Activated naive CD8-positive, alpha-beta T cell treated with anti-CD3 and anti-CD28 coated beads, Interleukin-2, amount 10 ng/mL, durations not matched to agents 7 days and 5 days (primary cell): ENCODE measurements at regions of chr4 and their contacts with region 1.

Region 1: GRCh38 chr4:17810260-17811077 is at the starts of genes DCAF16 and NCAPG:
- DNase-seq: peak; percentile 97
- ATAC-seq: peak; percentile 92
- H3K4me3 Mint-ChIP-seq: peak within 1 kb of the TSS; percentile 92
- H3K27ac Mint-ChIP-seq: peak within 1 kb of the TSS; percentile 99
- H3K4me1 Mint-ChIP-seq: peaks cover 36% of the 10 kb centered on the region
- H3K27me3 Mint-ChIP-seq: no peaks in the 10 kb centered on the region
- total RNA-seq, gene DCAF16: 54.5 to 60.6 TPM
- total RNA-seq, gene NCAPG: 59.1 to 66.6 TPM

Region 2: GRCh38 chr4:17576932-17577665 is 233.4 kb before region 1 on chr4 and contains the start of gene LAP3:
- POLR2A ChIA-PET with region 1: interaction called, 64 read pairs
- DNase-seq: peak; percentile 100
- ATAC-seq: peak; percentile 82
- H3K4me3 Mint-ChIP-seq: peak within 1 kb of the TSS; percentile 94
- H3K27ac Mint-ChIP-seq: peak within 1 kb of the TSS; percentile 99
- H3K4me1 Mint-ChIP-seq: peaks cover 34% of the 10 kb centered on the region
- H3K27me3 Mint-ChIP-seq: no peaks in the 10 kb centered on the region
- total RNA-seq, gene LAP3: 132 to 136 TPM

Region 3: DNA sequence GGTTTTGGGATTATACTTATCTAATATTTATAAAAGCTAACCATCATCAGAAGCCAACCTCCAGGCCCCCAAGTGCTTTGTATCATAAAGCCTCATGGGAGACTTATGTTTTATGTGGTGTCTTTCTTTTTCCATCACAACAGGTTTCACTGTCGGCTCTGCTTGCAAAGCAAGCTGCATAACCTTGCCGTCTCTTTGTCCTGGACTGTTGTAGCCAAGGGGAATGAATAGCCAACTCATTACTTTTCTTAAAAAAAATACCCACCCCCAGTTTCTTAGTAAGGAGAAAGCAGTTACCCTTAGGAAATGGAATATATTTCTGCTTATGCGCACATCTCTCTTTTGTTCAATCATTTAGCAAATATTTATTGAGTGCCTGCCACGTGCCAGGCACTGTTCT is 69.8 kb before region 1 on chr4:
- POLR2A ChIA-PET with region 1: no interaction called
- DNase-seq: no peak
- ATAC-seq: no peak
- H3K4me3 Mint-ChIP-seq: no peak overlapping the region
- H3K27ac Mint-ChIP-seq: no peak overlapping the region
- H3K4me1 Mint-ChIP-seq: no peaks in the 10 kb centered on the region
- H3K27me3 Mint-ChIP-seq: peaks cover 2% of the 10 kb centered on the region

Region 4: DNA sequence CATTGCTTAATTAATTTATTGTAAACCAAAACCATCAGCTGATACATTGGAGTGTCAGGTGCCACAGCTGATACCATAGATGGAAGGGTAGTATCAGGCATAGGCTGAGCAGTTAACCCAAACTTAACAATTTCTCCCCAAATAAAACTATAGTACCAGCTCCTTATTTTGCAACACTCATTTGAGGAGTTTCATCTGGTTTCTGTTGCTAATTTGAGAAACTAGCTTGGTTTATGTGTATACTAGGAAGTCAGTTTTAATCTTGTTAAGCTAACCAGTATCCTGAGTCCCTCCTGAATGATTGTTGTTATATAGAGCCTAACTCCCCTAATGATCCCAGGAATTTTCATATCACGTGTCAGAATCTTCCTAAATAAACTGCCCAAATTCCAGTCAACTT is 12.7 kb before region 1 on chr4:
- POLR2A ChIA-PET with region 1: interaction called, 22 read pairs
- DNase-seq: no peak
- ATAC-seq: no peak
- H3K4me3 Mint-ChIP-seq: no peak overlapping the region
- H3K27ac Mint-ChIP-seq: no peak overlapping the region
- H3K4me1 Mint-ChIP-seq: no peaks in the 10 kb centered on the region
- H3K27me3 Mint-ChIP-seq: no peaks in the 10 kb centered on the region